HepG2 (cell line): ENCODE measurements at regions of chr11 and their contacts with region 1.

Region 1: DNA sequence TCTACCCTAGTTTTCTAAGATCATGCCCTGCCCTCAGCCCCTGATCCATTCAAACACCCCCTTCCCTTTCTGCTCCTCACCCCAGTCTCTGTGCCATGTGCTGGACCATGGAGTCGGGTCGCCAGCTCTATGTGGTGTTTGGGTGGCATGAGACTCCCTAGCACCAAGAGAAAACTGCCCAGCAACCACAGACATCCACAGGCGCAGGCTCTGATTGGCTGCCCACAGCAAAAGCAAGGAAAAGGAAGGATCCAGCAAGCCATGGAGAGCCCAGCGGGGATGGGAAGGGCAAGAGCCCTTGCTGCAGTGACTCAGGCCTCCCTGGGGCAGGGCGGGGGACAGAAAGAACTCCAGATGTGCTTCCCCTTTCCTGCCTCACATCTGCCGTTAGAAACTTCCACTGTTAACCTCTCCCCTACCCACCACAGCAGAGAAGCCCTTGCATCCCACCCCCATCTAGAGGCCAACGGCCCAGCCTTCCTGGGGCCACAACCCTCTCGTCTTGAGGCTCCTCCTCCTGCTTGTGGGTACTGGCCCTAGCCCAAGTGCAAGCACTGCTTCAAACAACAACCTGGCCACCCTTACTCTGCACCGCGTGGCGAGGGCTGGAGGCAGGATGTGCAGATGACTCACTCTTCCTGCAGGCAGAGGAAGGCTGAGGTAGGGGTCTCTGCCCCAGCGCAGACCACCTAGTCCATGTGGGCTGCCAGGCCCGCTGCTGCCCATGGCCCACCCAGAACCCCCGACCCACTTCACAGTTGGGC is 9.7 kb upstream of the AHNAK start:
- DNase-seq: no peak
- ATAC-seq: peak; percentile 1
- H3K4me3 ChIP-seq: no peak overlapping the region
- H3K27ac ChIP-seq: peak overlapping the region; percentile 44
- H3K4me1 ChIP-seq: peaks cover 85% of the 10 kb centered on the region
- H3K27me3 ChIP-seq: no peaks in the 10 kb centered on the region
- CTCF ChIP-seq: no peak
- EP300 ChIP-seq: no peak
- POLR2A ChIP-seq: no peak
- RAD21 ChIP-seq: no peak

Region 2: GRCh38 chr11:62421996-62422395 is 134.3 kb before region 1 on chr11:
- CTCF ChIA-PET with region 1: interaction called, 32 read pairs
- POLR2A ChIA-PET with region 1: interaction called, 5 read pairs
- in situ Hi-C with region 1: loop called (anchors 5 kb)
- intact Hi-C with region 1: loop called (anchors 1 kb)
- DNase-seq: no peak
- ATAC-seq: no peak
- H3K4me3 ChIP-seq: no peak overlapping the region
- H3K27ac ChIP-seq: no peak overlapping the region
- H3K4me1 ChIP-seq: peaks cover 48% of the 10 kb centered on the region
- H3K27me3 ChIP-seq: peaks cover 0 to 9% of the 10 kb centered on the region in 2 experiments; a peak in 2 of 5 replicates
- CTCF ChIP-seq: no peak
- EP300 ChIP-seq: no peak
- POLR2A ChIP-seq: no peak
- RAD21 ChIP-seq: no peak

Region 3: DNA sequence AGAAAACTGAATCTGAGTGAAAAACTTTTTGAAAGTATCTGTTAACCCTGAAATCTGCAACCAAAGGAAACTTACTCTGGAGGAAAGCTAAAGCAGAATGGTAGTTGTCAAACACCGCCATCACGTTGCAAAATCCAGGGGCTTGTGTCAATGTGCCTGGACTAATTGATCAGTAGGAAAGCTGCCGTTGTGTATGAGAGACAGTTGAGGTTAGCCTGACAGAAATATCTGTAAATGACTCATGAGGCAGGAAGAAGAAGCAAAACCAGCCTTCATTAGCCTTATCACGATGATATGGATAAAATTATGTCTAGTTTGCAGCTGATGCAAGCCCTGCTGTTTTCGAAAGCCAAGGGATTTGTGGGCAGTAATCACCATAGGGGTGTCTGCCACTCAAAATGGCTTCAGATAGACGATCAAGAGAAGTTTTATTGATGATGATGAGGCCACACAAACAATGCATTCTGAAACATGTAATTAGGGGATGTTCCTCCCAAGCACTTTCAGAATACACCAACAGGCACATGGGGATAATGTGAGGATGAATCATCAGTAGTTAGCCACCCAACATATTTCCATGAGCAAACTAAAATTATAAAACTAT is 128.6 kb before region 1 on chr11:
- CTCF ChIA-PET with region 1: interaction called, 32 read pairs
- POLR2A ChIA-PET with region 1: interaction called, 5 read pairs
- in situ Hi-C with region 1: loop called (anchors 5 kb)
- intact Hi-C with region 1: loop called (anchors 1 kb)
- DNase-seq: no peak
- ATAC-seq: no peak
- H3K4me3 ChIP-seq: no peak overlapping the region
- H3K27ac ChIP-seq: peak overlapping the region; percentile 30
- H3K4me1 ChIP-seq: peaks cover 81% of the 10 kb centered on the region
- H3K27me3 ChIP-seq: no peaks in the 10 kb centered on the region
- CTCF ChIP-seq: no peak
- EP300 ChIP-seq: no peak
- POLR2A ChIP-seq: no peak
- RAD21 ChIP-seq: no peak

Region 4: GRCh38 chr11:62532096-62532495 is 24.2 kb before region 1 on chr11:
- CTCF ChIA-PET with region 1: no interaction called
- POLR2A ChIA-PET with region 1: no interaction called
- in situ Hi-C with region 1: no loop called
- intact Hi-C with region 1: no loop called
- DNase-seq: no peak
- ATAC-seq: no peak
- H3K4me3 ChIP-seq: no peak overlapping the region
- H3K27ac ChIP-seq: no peak overlapping the region
- H3K4me1 ChIP-seq: peaks cover 13% of the 10 kb centered on the region
- H3K27me3 ChIP-seq: no peaks in the 10 kb centered on the region
- CTCF ChIP-seq: no peak
- EP300 ChIP-seq: no peak
- POLR2A ChIP-seq: no peak
- RAD21 ChIP-seq: no peak

Region 5: DNA sequence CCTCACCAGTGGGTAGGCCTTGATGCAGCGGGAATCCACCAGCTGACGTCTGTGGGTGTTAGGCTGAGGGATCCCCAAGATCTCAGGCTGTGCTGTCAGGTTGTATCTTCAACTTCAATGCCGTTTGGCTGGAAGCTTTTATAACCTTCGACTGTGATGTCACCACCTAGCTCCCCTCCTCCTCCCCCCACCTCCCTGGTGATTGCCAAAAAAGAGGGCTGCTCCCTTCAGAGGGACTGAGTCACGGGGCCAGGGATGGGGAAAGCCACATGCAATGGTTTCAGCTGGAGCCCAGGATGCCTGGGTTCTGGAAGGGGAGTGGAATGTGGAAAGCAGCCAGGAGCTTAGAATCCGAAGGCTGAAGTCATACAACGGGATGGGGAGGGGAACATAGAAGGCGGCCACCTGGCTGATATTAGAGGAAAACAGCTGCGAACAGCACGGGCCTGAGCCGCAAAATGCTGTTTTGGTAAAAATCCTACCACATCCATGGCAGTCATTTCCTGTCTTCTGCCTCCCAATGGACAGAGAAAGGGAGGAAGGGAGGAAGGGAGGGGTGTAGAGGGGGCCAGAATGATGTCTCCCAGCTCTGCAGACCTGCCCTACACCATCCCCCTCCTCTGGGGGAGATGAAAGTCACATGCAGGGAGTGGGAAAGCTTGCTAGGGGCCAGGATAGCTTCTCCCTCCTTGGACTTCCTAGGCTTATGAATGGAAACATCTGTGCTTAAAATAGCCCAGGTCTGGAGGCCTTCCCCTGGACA is 133.3 kb after region 1 on chr11 and contains the start of gene LRRN4CL:
- CTCF ChIA-PET with region 1: no interaction called
- POLR2A ChIA-PET with region 1: no interaction called
- in situ Hi-C with region 1: no loop called
- intact Hi-C with region 1: no loop called
- DNase-seq: no peak
- ATAC-seq: peak; percentile 13; the same call in 1 of the 3 replicates
- H3K4me3 ChIP-seq: no peak within 1 kb of the TSS
- H3K27ac ChIP-seq: no peak within 1 kb of the TSS
- H3K4me1 ChIP-seq: no peaks in the 10 kb centered on the region
- H3K27me3 ChIP-seq: no peaks in the 10 kb centered on the region
- CTCF ChIP-seq: no peak
- EP300 ChIP-seq: no peak
- POLR2A ChIP-seq: 0 out of 4 replicates have a peak, but pooled peaks of 1 of the 2 experiments have one; percentile 18
- RAD21 ChIP-seq: no peak
- total RNA-seq, gene LRRN4CL: 0.11 TPM in 1 of 2 replicates, not detected in the other